ENCODE measurements at regions of chr2 and their contacts with region 1.

Region 1: DNA sequence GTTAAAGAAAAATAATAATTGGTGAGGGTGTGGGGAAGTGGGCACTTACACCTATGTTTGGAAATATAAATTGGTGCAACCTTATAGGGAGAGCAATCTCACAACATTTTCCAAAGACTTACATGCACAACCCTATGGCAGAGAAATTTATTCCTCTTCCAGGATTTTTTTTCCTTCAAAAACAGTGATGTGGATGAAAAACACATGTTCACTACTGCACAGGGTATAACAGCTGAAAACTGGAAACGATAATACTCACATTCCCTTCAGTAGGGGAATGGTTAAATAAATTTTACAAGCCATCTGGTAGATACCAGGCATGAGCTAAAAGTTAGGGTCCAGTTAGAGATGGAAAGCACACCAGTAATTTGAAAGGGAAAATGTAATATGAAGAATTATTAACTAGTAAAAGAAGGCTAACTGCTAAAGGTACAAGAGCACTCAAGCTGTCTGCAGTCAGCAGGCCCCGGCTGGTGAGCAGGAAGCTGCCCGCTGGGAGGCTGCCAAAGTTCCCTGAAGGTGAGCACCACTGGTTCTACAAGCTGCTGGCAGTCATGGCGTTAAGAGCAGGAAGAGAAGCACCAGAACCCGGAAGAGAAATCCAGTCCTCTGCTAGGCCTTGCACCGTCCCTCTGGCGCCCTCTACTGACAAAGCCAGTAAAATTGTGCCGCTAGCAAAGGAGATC is 28.4 kb upstream of the CASP8 start:
- DNase-seq: peak; percentile 88
- H3K4me3 Mint-ChIP-seq: peak overlapping the region; percentile 93
- H3K27ac Mint-ChIP-seq: peak overlapping the region; percentile 87
- H3K4me1 Mint-ChIP-seq: peaks cover 57% of the 10 kb centered on the region
- H3K27me3 Mint-ChIP-seq: no peaks in the 10 kb centered on the region

Region 2: DNA sequence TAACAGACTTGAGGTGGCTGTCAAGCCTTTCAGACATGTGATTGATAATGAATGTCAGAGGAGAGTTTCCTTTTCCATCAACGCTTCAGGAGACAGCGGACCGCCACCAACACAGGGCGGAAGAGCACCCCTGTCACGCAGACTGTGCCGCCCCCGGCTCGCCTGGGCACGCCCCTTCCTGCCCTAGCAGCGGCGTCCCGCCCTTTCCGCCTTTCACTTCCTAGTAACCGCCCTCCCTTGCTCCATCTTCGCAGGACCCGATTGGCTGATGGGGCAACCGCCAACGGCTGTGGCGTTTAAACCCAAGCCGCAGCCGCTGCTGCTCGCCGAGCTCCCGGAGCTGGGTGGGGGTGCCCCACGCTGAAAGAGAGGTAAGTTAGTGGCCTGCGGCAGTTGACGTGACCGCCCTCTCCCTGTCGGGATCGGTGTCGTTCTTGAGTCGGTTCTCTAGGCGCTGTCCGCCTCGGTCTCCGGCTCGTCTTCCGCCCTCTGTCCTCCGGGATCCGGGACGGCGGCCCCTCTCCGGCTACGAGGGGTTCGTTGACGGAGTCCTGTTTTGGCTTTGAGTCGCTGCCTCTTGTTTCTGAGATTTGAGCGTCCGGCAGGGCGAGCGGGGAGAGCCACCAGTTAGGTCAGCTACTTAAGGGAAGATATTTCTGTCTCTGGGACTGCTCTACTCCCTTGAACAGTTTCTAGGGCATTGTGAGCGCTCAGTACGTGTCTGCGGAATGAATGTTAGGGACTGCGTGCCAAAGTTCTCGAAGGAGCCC is 705.9 kb before region 1 on chr2 and contains the start of gene SGO2:
- intact Hi-C with region 1: loop called (anchors 5 kb)
- DNase-seq: peak; percentile 95
- H3K4me3 Mint-ChIP-seq: peak within 1 kb of the TSS; percentile 94
- H3K27ac Mint-ChIP-seq: peak within 1 kb of the TSS; percentile 89
- H3K4me1 Mint-ChIP-seq: peaks cover 32% of the 10 kb centered on the region
- H3K27me3 Mint-ChIP-seq: no peaks in the 10 kb centered on the region
- total RNA-seq, gene SGO2: 20.5 and 20.9 TPM in 2 replicates

Region 3: DNA sequence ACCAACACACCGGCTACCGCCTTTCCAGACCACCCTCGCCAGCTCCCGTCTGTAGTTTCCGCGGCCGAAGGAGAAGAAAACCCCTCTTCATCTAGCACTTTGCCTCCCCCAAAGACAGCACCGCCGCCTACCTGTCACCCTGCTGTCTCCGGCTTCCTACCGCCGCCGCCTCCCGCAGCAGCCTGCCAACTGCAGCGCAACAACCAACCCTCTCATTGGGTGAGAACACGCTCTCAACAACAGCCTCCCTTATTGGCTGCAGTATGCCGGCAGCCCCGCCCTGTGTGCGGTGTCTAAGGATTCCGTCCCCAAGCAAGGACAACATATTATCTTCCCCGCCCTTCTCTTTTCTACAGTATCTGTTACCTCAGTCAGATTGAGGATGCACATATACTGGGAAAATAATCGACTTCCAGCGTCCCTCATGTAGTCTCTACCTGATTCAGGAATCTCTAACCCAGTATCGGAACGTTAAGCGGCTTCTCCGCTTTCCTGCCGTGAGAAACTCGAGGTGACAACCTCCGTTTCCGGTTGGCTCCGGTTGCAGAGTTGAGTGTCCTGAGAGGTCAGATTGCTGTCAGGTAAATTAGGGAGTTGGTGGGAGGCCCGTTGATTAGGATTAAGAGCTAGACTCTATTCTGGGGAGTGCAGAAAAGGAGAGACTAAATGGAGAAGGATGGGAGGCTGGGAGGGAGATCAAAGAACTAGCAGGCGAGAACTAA is 160.3 kb before region 1 on chr2 and contains the starts of genes HYCC2 and NDUFB3:
- intact Hi-C with region 1: loop called (anchors 1 kb)
- DNase-seq: peak; percentile 90
- H3K4me3 Mint-ChIP-seq: peak within 1 kb of the TSS; percentile 90
- H3K27ac Mint-ChIP-seq: peak within 1 kb of the TSS; percentile 95
- H3K4me1 Mint-ChIP-seq: peaks cover 49% of the 10 kb centered on the region
- H3K27me3 Mint-ChIP-seq: no peaks in the 10 kb centered on the region
- total RNA-seq, gene HYCC2: 26.1 and 29.4 TPM in 2 replicates
- total RNA-seq, gene NDUFB3: 105 and 121 TPM in 2 replicates

Region 4: DNA sequence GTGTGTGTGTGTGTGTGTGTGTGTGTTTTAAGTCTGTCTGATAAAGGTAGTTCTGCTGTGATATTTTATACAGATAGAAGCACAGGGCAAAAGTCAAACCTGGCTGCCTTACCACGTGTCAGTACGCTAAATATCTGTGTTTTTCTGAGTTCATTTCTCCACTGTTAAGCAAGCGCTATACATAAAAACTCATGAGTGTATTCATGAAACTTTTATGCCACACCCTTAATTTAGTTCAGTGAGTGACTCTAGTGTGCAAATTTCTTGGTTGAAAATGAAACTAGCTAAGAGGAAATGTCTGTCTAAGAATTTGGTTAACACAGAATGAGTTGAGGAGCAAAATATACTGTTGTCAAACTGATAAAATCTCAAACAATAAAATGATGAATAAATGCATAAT is 37.8 kb before region 1 on chr2:
- intact Hi-C with region 1: loop called (anchors 1 kb)
- DNase-seq: no peak
- H3K4me3 Mint-ChIP-seq: peak overlapping the region; percentile 38
- H3K27ac Mint-ChIP-seq: peak overlapping the region; percentile 57
- H3K4me1 Mint-ChIP-seq: peaks cover 65% of the 10 kb centered on the region
- H3K27me3 Mint-ChIP-seq: no peaks in the 10 kb centered on the region

Region 5: DNA sequence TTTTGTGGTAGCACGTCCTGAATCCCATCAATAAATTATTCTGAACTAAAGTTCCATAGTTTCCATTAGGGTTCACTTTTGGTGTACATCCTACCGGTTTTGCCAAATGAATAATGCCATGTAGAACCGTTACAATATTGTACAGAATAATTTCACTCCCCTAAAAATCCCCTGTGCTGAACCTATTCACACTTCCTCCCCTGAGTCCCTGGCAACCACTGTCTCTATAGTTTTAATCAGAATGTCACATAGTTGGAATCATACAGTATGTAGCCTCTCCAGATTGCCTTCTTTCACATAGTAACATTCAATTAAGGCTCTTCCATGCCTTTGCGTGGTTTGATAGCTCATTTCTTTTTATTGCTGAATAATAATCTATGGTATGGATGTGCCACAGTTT is 18.8 kb after region 1 on chr2:
- intact Hi-C with region 1: no loop called
- DNase-seq: no peak
- H3K4me3 Mint-ChIP-seq: peak overlapping the region; percentile 7
- H3K27ac Mint-ChIP-seq: peak overlapping the region; percentile 26
- H3K4me1 Mint-ChIP-seq: peaks cover 67% of the 10 kb centered on the region
- H3K27me3 Mint-ChIP-seq: no peaks in the 10 kb centered on the region

Region 6: GRCh38 chr2:201363857-201364560 is 132.1 kb after region 1 on chr2:
- intact Hi-C with region 1: loop called (anchors 1 kb)
- DNase-seq: peak; percentile 30
- H3K4me3 Mint-ChIP-seq: no peak overlapping the region
- H3K27ac Mint-ChIP-seq: no peak overlapping the region
- H3K4me1 Mint-ChIP-seq: peaks cover 45% of the 10 kb centered on the region
- H3K27me3 Mint-ChIP-seq: no peaks in the 10 kb centered on the region

Region 7: GRCh38 chr2:201642579-201643215 is 410.8 kb after region 1 on chr2:
- intact Hi-C with region 1: loop called (anchors 1 kb)
- DNase-seq: peak; percentile 84
- H3K4me3 Mint-ChIP-seq: peak overlapping the region; percentile 89
- H3K27ac Mint-ChIP-seq: peak overlapping the region; percentile 92
- H3K4me1 Mint-ChIP-seq: peaks cover 18% of the 10 kb centered on the region
- H3K27me3 Mint-ChIP-seq: peaks cover 3% of the 10 kb centered on the region

Measured in activated T-helper 1 cell treated with anti-CD3 and anti-CD28 coated beads, Interleukin-12 subunit alpha, Interleukin-12 subunit beta, Interleukin-2, Interleukin-4 antibody, amounts not matched to agents 30 ng/mL and 10 ng/mL and 1 ng/mL, durations not matched to agents 14 hours and 24 hours and 36 hours (primary cell).